ENCODE measurements at regions of chr2 and their contacts with region 1.

Region 1: DNA sequence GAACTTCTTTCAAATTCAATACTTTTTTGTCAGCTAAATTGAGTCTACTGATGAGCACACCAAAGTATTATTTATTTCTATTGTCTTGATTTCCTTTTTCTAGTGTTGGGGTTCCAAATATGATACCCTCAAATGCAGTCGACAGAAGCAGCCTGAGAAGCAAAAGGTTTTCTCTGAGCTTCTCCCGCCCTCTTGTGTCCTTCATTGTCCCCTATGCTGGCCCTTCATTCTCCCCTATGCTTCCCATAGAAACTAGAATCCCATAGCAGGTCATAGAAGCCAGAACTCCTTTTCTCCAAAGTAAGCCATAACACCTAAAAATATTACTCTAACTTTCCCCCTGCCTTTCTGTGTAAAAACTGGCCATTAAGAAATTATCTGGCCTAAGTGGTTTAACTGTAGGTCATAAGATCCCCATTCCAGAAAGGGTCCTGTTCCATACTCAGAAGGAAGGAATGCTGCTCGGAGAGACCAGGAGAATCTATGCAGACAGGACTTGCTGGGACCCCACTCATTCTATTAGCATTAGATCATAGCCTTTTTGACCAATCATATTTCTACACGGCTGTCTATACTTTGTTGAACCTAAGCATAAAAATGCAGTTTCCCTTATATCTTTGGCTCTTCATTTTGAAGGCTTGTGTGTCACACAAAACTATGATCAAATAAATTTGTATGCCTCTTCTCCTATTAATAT is 764.6 kb upstream of the PKDCC start:
- DNase-seq: peak in 1 of 2 experiments; percentile 3
- H3K4me3 ChIP-seq: no peak overlapping the region
- H3K4me3 Mint-ChIP-seq: no peak overlapping the region
- H3K27ac Mint-ChIP-seq: no peak overlapping the region
- H3K4me1 ChIP-seq: no peaks in the 10 kb centered on the region
- H3K4me1 Mint-ChIP-seq: no peaks in the 10 kb centered on the region
- H3K27me3 ChIP-seq: no peaks in the 10 kb centered on the region
- H3K27me3 Mint-ChIP-seq: no peaks in the 10 kb centered on the region
- CTCF ChIP-seq: peak in 1 of 2 experiments; percentile 28

Region 2: GRCh38 chr2:40844353-40845277 is 438.6 kb before region 1 on chr2:
- CTCF ChIA-PET with region 1: no interaction called
- POLR2A ChIA-PET with region 1: no interaction called
- intact Hi-C with region 1: loop called (anchors 1 kb)
- DNase-seq: peak; percentile 41 to 52
- H3K4me3 ChIP-seq: no peak overlapping the region
- H3K4me3 Mint-ChIP-seq: peak overlapping the region; percentile 25
- H3K27ac Mint-ChIP-seq: no peak overlapping the region
- H3K4me1 ChIP-seq: no peaks in the 10 kb centered on the region
- H3K4me1 Mint-ChIP-seq: no peaks in the 10 kb centered on the region
- H3K27me3 ChIP-seq: no peaks in the 10 kb centered on the region
- H3K27me3 Mint-ChIP-seq: peaks cover 5% of the 10 kb centered on the region
- CTCF ChIP-seq: peak; percentile 23 to 24

Region 3: DNA sequence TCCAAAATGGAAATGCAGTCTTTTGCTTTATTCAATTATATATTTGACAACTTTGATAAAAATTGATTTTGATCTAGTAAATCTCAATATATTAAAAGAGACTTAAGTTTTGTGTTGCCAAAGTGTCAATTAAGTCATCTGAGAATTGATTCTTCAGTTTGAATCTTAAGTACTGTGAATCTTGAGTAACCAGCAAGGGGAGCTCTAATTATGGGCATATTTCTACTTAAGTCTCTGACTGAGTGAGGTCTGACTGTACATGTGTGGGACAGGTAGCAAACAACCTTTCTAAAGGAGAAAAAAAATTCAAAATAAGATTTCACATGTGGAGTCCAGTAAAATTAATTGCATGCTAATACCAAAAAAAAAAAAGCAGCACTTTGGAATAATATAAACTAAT is 327.6 kb before region 1 on chr2:
- CTCF ChIA-PET with region 1: interaction called, 3 read pairs
- POLR2A ChIA-PET with region 1: no interaction called
- intact Hi-C with region 1: loop called (anchors 1 kb)
- DNase-seq: no peak
- H3K4me3 ChIP-seq: no peak overlapping the region
- H3K4me3 Mint-ChIP-seq: no peak overlapping the region
- H3K27ac Mint-ChIP-seq: no peak overlapping the region
- H3K4me1 ChIP-seq: no peaks in the 10 kb centered on the region
- H3K4me1 Mint-ChIP-seq: no peaks in the 10 kb centered on the region
- H3K27me3 ChIP-seq: no peaks in the 10 kb centered on the region
- H3K27me3 Mint-ChIP-seq: peaks cover 3% of the 10 kb centered on the region
- CTCF ChIP-seq: peak in 1 of 2 experiments; percentile 22

Region 4: DNA sequence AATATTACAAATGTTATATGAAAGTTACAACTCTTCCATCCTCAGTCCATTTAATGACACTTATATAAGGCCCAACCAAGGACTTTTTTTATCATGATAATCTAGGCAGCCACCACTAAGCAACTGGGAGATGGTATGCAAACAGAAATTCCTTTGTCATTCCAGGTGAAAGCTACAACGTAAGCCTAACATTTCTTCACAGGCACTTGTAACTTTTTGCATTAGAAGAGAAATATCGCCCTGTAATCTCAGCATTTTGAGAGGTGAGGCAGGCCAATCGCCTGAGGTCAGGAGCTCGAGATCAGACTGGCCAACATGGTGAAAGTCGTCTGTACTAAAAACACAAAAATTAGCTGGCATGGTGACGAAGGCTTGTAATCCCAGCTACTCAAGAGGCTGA is 250.1 kb before region 1 on chr2:
- CTCF ChIA-PET with region 1: no interaction called
- POLR2A ChIA-PET with region 1: no interaction called
- intact Hi-C with region 1: loop called (anchors 1 kb)
- DNase-seq: no peak
- H3K4me3 ChIP-seq: no peak overlapping the region
- H3K4me3 Mint-ChIP-seq: no peak overlapping the region
- H3K27ac Mint-ChIP-seq: no peak overlapping the region
- H3K4me1 ChIP-seq: peaks cover 12% of the 10 kb centered on the region
- H3K4me1 Mint-ChIP-seq: peaks cover 12% of the 10 kb centered on the region
- H3K27me3 ChIP-seq: no peaks in the 10 kb centered on the region
- H3K27me3 Mint-ChIP-seq: no peaks in the 10 kb centered on the region
- CTCF ChIP-seq: no peak

Measured in Caco-2 (cell line).